Head of caudate nucleus (tissue), 42 donors: ENCODE measurements at regions of chr6 and their contacts with region 1.

Region 1: DNA sequence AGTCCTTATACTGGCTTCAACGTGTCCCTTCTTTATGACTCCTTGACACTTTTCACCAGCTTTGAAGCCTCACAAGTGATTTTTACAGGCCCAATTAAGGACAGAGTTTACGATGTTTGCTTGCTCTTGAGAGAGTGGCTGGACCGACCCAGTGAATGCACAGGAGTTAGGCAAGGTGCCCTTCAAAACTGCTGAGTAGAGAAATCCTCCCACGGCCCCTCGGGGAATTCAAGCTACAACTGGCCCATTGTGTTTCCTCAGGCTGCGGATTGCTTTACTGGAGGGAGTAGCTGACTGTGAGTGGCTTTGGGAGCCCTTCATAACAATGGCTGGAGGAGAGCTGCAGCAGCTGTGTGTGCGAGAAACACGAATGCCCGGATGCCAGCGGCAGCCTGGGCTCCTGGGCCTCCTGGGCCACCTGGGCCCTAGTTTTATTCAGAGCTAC is 50.0 kb downstream of the SGK1 start:
- DNase-seq: peak in 41 of 42 donors; percentile 16 to 83 (median 59)

Region 2: DNA sequence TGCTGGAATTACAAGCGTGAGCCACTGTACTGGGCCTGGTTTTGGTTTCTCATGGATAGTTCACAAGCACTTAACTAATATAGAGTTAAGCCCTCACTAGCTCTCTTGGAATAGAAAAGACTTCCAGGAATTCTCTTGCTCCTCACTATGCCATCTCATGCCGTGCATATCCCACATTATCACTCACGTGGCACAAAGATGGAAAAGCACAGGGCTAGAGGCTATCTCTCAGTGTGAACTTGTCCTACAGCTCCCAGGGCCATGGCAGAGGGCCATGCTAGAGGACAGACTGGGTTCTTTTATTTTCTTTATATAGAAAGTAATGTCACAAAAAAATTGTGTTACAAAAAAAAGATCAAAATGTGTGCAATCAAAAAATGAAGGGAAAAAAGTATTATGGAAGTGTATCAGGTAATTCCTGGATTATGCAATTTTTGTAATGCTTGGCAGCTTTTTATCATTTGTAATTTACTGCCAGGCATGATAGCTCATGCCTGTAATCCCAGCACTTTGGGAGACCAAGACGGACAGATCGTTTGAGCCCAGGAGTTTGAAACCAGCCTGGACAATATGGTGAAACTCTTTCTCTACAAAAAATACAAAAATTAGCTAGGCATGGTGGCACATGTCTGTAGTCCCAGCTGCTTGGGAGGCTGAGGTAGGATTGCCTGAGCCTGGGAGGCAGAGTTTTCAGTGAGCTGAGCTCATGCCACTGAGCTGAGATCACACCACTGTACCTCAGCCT is 209.1 kb before region 1 on chr6:
- intact Hi-C with region 1: no loop called
- DNase-seq: no peak

Region 3: DNA sequence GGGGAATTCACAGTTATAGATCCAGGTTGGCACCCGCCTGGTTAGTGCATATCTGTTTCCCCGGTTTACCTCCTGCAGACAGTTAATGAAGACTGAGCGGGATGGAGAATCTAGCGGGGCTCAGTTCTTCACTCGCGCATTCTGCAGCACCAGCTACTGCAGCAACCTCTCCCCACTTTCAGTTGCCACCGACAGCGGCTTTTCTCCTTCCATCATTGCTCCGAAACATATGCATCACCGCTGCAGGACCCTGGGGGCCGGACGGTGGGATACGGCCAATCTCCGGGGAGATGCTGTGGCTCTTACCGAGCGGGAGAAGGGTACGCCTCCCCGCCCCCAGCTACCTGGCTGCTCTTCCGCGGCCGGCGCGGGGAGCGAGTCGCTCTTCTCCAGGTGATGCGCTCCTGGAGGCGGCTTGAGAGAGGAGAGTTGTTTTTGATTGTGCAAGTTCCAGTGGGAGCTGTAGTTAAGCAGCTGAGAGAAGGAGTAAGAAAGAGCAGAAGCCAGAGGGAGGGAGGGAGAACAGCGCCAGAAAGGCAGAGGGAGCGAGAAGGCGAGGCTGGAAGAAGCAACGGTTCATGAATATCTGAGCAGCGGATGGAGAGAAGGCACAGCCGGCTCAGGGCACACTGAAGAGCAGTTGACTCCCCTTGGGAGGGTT is 49.7 kb after region 1 on chr6 and contains the start of gene SGK1:
- intact Hi-C with region 1: loop called (anchors 10 kb)
- DNase-seq: peak; percentile 55 to 93 (median 78)

Region 4: DNA sequence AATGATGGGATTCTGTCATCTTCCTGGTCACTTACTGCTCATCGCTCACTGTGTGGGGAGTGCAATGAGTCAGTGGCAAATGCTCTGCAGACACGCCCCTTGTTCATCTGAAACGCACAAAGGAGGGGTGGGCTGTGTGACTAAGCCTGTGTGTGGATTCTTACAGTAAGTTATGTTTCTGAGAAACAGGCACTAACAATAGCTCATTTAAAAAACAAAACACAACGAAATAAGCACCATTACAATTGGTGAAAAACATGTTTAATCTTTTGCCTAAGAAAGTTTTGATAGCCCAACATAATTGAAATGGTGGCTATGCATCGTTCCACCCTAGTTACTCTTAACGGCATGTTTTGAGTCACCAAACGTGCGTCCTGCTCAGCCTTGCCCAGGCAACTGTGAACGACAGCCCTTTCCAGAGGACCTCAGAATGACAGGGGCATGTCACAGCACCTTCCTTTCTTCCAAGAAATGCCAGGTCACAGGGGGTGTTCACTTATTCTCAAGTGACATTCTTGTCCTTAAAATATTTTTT is 168.4 kb after region 1 on chr6:
- intact Hi-C with region 1: no loop called
- DNase-seq: peak; percentile 38 to 94 (median 79)